ENCODE measurements at regions of chr18 and their contacts with region 1.

Region 1: GRCh38 chr18:26190506-26190905 is 35.7 kb upstream of the TAF4B start:
- DNase-seq: peak; percentile 37
- CTCF ChIP-seq: no peak

Region 2: DNA sequence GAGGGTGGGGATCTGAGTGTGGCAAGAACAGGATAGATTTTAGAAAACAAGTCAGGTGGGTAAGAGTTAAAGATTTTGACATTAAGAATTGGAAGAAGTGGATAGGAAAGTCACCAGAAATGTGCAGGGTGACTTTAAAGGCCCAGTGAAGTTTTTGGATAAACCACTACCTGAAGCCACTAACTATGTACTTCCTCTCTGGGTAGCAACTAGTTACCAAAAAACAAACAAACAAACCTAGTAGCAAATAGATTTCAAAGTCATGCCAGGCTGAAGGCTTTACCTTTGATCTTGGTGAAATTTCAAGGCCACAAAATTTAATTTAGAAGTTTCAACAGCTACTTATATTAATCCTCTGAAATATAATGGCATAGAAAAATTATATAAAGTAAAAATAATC is 14.4 kb before region 1 on chr18:
- CTCF ChIA-PET with region 1: interaction called, 14 read pairs
- POLR2A ChIA-PET with region 1: no interaction called
- DNase-seq: no peak
- CTCF ChIP-seq: no peak

Region 3: GRCh38 chr18:26262156-26262555 is 71.7 kb after region 1 on chr18:
- CTCF ChIA-PET with region 1: no interaction called
- POLR2A ChIA-PET with region 1: no interaction called
- DNase-seq: no peak
- CTCF ChIP-seq: no peak

Measured in GM10248 (cell line).